ENCODE measurements at regions of chr5 and their contacts with region 1.

Region 1: GRCh38 chr5:88889189-88890069 is 6.4 kb upstream of the MEF2C start:
- DNase-seq: peak; percentile 71 to 79
- ATAC-seq: peak; percentile 84 to 97 (median 90)
- H3K4me3 ChIP-seq: peak overlapping the region; percentile 53 to 73 (median 64)
- H3K27ac ChIP-seq: peak overlapping the region; percentile 65 to 95 (median 90)
- H3K4me1 ChIP-seq: peaks cover 4 to 65% (median 44%) of the 10 kb centered on the region in 9 donors
- H3K27me3 ChIP-seq: peaks cover 0 to 9% (median 0%) of the 10 kb centered on the region in 7 donors
- CTCF ChIP-seq: peak in 2 of 9 donors; percentile 7 to 9

Region 2: GRCh38 chr5:87885758-87886157 is 1003.7 kb before region 1 on chr5:
- intact Hi-C with region 1: no loop called
- DNase-seq: no peak
- ATAC-seq: no peak
- H3K4me3 ChIP-seq: no peak overlapping the region
- H3K27ac ChIP-seq: no peak overlapping the region
- H3K4me1 ChIP-seq: no peaks in the 10 kb centered on the region
- H3K27me3 ChIP-seq: no peaks in the 10 kb centered on the region
- CTCF ChIP-seq: no peak

Region 3: DNA sequence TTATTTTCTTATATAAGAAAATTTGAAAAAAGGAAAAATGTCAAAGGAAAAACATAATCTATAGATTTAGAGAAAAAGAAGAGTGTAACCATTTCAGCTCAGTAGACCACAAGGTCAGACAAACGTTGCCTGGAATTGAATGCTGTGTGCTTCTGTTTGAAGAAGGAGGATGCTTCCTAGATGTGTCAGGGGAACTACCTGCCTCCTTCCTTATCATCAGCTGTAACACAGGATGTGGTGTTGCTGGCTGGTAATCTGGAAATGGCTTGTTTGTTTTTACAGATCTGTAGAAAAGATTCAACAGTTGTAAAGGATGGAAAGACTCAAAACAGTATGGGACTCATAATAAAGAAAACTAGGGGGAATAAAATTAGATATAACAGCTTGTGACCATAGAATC is 154.2 kb after region 1 on chr5:
- intact Hi-C with region 1: loop called in 1 of 10 experiments (anchors 10 kb)
- DNase-seq: no peak
- ATAC-seq: no peak
- H3K4me3 ChIP-seq: no peak overlapping the region
- H3K27ac ChIP-seq: no peak overlapping the region
- H3K4me1 ChIP-seq: peaks cover 0 to 37% (median 0%) of the 10 kb centered on the region in 9 donors
- H3K27me3 ChIP-seq: no peaks in the 10 kb centered on the region
- CTCF ChIP-seq: no peak